ENCODE measurements at regions of chr1 and their contacts with region 1.

Region 1: GRCh38 chr1:16243936-16244649 is 7.1 kb upstream of the CPLANE2 start:
- DNase-seq: peak; percentile 79 to 90
- ATAC-seq: peak; percentile 73
- H3K4me3 ChIP-seq: no peak overlapping the region
- H3K27ac ChIP-seq: peak overlapping the region in 1 of 2 donors; percentile 11
- H3K4me1 ChIP-seq: peaks cover 0 to 1% of the 10 kb centered on the region in 2 donors
- H3K27me3 ChIP-seq: no peaks in the 10 kb centered on the region

Region 2: GRCh38 chr1:16078925-16079656 is 165.0 kb before region 1 on chr1:
- intact Hi-C with region 1: loop called (anchors 5 kb)
- DNase-seq: peak; percentile 84 to 92
- ATAC-seq: peak; percentile 80
- H3K4me3 ChIP-seq: no peak overlapping the region
- H3K27ac ChIP-seq: no peak overlapping the region
- H3K4me1 ChIP-seq: no peaks in the 10 kb centered on the region
- H3K27me3 ChIP-seq: no peaks in the 10 kb centered on the region

Region 3: GRCh38 chr1:16206547-16207317 is 37.4 kb before region 1 on chr1:
- intact Hi-C with region 1: loop called in 1 of 2 experiments (anchors 5 kb)
- DNase-seq: peak; percentile 99
- ATAC-seq: peak; percentile 94
- H3K4me3 ChIP-seq: peak overlapping the region in 1 of 2 donors; percentile 8
- H3K27ac ChIP-seq: peak overlapping the region in 1 of 2 donors; percentile 22
- H3K4me1 ChIP-seq: no peaks in the 10 kb centered on the region
- H3K27me3 ChIP-seq: no peaks in the 10 kb centered on the region

Region 4: DNA sequence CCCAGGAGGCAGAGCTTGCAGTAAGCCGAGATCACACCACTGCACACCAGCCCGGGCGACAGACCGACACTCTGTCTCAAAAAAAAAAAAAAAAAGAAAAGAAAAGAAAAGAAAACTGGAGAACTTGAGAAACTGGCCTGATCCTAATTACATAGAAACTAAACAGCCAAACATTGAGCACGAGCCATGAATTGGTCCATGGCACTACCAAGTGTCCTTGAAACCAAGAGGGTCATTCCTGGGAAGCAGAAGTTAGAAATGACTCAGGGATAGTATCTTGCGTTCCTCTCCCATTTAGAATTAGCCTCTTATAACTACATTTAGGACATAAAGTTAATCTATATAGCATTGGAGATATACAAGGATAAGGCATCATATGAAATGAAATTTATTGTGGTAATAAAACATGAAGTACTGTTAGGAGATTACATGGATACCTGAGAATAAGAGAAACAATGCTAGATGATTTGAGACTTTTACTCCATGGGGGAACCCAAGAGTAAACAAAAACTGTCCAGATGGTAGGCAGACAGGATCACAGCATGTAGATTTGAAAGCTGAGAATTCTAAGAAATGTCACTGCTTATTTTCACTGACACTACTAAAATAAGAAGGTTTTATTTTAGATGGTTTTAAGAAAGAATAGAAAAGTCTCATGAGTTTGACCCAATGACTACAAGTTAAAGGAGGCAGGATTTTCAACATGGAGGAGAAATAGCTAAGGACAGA is 32.4 kb after region 1 on chr1:
- intact Hi-C with region 1: no loop called
- DNase-seq: no peak
- ATAC-seq: no peak
- H3K4me3 ChIP-seq: no peak overlapping the region
- H3K27ac ChIP-seq: no peak overlapping the region
- H3K4me1 ChIP-seq: peaks cover 2 to 9% of the 10 kb centered on the region in 2 donors
- H3K27me3 ChIP-seq: no peaks in the 10 kb centered on the region

Region 5: GRCh38 chr1:16289963-16290362 is 45.9 kb after region 1 on chr1:
- intact Hi-C with region 1: no loop called
- DNase-seq: no peak
- ATAC-seq: no peak
- H3K4me3 ChIP-seq: no peak overlapping the region
- H3K27ac ChIP-seq: peak overlapping the region in 1 of 2 donors; percentile 67
- H3K4me1 ChIP-seq: peaks cover 9 to 16% of the 10 kb centered on the region in 2 donors
- H3K27me3 ChIP-seq: no peaks in the 10 kb centered on the region